ENCODE measurements at regions of chr12 and their contacts with region 1.

Region 1: DNA sequence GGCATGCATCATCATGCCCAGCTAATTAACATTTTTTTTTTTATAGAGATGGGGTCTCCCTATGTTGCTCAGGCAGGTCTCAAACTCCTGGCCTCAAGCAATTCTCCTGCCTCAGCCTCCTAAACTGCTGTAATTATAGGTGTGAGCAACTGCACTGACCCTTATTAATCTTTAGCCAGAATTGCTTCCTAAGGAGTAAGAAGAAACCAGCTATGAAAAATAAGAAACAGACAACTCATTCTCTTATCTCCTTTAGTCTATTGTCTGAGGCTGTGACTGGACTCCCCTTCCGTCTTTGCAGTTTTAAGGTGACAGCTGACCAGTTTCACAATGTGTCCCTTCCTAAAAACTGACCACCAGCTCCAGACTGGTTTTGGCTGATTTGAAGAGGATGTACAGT is 52.4 kb downstream of the EMP1 start:
- DNase-seq: no peak

Region 2: GRCh38 chr12:13362260-13362841 is 113.4 kb after region 1 on chr12:
- CTCF ChIA-PET with region 1: no interaction called
- POLR2A ChIA-PET with region 1: no interaction called
- DNase-seq: peak; percentile 71

Region 3: GRCh38 chr12:13812168-13812567 is 563.2 kb after region 1 on chr12:
- CTCF ChIA-PET with region 1: interaction called, 12 read pairs
- POLR2A ChIA-PET with region 1: no interaction called
- DNase-seq: no peak